OCI-LY7 (cell line): ENCODE measurements at regions of chr5 and their contacts with region 1.

Region 1: DNA sequence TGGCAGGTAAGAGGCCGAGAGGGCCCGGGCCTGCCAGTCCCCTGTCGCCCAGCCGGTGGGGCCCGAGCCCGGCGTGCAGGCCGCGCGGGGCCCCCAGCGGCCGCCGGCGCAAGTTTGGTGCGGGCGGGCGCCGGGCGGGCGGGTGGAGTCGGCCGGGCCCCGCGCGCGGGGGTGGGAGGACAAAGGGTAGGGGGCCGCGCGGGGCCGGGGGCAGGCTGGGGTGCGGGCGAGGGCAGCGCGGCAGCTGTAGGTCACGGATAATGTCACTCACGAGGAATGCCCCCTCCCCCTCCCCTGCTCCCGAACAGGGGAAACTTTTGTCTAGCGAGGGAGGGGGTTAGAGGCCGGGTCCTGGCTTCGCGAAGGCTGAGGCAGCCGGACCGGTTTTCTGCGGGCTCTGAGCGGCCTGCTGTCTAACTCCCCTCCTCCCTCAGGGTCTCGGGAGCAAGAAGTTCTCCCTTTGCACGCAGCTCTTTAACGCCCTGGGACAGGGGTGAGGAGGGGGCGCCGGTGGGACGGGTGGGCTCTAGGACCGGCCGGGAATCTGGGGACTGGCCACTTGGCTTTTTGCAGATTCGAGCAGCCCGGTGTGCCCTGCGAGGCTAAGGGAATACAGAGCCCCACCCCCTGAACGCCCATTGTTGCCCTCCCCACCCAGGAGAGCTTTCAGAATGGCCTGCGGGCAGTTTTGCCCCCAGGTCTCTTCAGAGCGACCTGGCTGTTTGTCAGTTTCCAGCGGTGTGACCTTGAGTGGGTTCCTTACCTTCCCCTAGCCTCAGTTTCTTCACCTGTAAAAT is 21.3 kb upstream of the NDST1 start:
- DNase-seq: peak; percentile 79
- H3K4me3 ChIP-seq: peak overlapping the region; percentile 92
- H3K27ac ChIP-seq: peak overlapping the region; percentile 73
- H3K4me1 ChIP-seq: peaks cover 57% of the 10 kb centered on the region
- CTCF ChIP-seq: no peak

Region 2: GRCh38 chr5:149960272-149961185 is 526.1 kb before region 1 on chr5 and contains the start of gene SLC26A2:
- CTCF ChIA-PET with region 1: no interaction called
- POLR2A ChIA-PET with region 1: no interaction called
- intact Hi-C with region 1: no loop called
- DNase-seq: peak; percentile 94
- H3K4me3 ChIP-seq: peak within 1 kb of the TSS; percentile 72
- H3K27ac ChIP-seq: no peak within 1 kb of the TSS
- H3K4me1 ChIP-seq: peaks cover 9% of the 10 kb centered on the region
- CTCF ChIP-seq: no peak
- total RNA-seq, gene SLC26A2: 1.2 and 2.1 TPM in 2 replicates

Region 3: DNA sequence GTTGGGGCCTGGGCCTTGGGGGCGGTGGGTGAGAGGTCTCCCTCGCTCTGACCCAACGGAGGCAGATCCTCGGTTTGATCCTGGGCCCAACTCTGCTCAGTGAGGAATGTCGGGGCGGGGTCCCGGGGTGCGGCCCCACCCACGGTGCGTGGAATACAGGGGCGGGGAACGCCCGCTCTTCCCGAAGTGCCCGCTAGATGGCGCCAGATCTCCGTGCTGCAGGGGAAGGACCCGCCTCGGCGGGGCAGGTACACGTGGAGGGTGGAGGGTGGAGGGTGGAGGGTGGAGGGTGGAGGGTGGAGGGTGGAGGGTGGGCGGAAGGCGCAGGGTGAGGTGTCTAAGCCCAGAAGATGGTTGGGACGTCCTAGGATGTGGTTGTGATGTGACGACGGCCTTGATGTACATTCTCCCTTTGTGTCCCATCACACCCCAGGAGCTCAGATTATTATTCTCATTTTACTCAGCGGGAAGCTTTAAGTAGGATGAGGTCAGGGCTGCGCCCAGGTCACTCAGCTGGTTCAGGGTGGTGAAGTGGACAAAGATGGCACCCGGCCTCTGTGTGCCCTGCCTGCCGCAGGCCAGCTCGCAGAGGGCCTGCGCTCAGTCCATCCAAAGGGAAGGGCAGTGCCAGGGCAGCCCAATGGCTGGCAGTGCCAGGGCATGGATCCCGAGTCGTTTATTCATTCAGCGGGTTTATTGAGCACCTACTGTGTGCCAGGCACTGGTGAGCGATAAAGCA is 27.6 kb before region 1 on chr5:
- CTCF ChIA-PET with region 1: interaction called, 12 read pairs
- POLR2A ChIA-PET with region 1: interaction called, 9 read pairs
- intact Hi-C with region 1: loop called (anchors 1 kb)
- DNase-seq: peak; percentile 84
- H3K4me3 ChIP-seq: no peak overlapping the region
- H3K27ac ChIP-seq: peak overlapping the region; percentile 87
- H3K4me1 ChIP-seq: peaks cover 71% of the 10 kb centered on the region
- CTCF ChIP-seq: peak; percentile 74

Region 4: GRCh38 chr5:150517272-150518152 is 30.9 kb after region 1 on chr5:
- CTCF ChIA-PET with region 1: interaction called, 9 read pairs
- POLR2A ChIA-PET with region 1: interaction called, 13 read pairs
- intact Hi-C with region 1: no loop called
- DNase-seq: no peak
- H3K4me3 ChIP-seq: no peak overlapping the region
- H3K27ac ChIP-seq: no peak overlapping the region
- H3K4me1 ChIP-seq: peaks cover 33% of the 10 kb centered on the region
- CTCF ChIP-seq: no peak

Region 5: DNA sequence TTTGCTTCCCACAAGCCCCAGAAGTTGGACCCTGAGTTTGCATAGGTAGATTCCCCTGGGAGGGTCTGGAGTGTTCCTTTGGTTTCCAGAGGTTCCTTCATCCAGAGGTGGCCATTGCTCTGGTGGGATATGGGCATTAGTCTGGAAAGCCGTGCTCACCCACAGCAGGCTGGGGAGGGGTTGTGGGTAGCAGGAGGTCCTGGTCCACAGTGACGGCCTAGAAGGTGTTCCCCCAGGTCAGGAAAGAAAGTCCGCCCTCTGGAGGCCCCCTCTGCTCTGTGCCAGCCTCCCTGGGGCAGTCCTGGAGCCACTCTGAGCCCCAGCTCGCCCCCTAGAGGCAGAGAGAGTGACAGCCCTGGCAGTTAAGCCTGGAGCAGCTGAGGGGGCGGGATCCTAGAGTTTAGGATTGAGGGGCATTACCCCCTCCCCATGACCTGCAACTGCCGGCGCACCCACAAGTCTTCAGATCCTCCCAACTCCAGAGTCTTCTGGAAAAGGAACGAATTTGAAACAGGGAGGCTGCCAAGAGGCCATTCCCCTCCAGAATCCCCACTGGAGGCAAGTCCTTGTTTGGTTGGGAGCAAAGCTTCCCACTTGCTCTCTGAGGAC is 58.1 kb after region 1 on chr5:
- CTCF ChIA-PET with region 1: interaction called, 3 read pairs
- POLR2A ChIA-PET with region 1: interaction called, 4 read pairs
- intact Hi-C with region 1: loop called (anchors 1 kb)
- DNase-seq: peak; percentile 86
- H3K4me3 ChIP-seq: no peak overlapping the region
- H3K27ac ChIP-seq: no peak overlapping the region
- H3K4me1 ChIP-seq: peaks cover 5% of the 10 kb centered on the region
- CTCF ChIP-seq: peak; percentile 97

Region 6: DNA sequence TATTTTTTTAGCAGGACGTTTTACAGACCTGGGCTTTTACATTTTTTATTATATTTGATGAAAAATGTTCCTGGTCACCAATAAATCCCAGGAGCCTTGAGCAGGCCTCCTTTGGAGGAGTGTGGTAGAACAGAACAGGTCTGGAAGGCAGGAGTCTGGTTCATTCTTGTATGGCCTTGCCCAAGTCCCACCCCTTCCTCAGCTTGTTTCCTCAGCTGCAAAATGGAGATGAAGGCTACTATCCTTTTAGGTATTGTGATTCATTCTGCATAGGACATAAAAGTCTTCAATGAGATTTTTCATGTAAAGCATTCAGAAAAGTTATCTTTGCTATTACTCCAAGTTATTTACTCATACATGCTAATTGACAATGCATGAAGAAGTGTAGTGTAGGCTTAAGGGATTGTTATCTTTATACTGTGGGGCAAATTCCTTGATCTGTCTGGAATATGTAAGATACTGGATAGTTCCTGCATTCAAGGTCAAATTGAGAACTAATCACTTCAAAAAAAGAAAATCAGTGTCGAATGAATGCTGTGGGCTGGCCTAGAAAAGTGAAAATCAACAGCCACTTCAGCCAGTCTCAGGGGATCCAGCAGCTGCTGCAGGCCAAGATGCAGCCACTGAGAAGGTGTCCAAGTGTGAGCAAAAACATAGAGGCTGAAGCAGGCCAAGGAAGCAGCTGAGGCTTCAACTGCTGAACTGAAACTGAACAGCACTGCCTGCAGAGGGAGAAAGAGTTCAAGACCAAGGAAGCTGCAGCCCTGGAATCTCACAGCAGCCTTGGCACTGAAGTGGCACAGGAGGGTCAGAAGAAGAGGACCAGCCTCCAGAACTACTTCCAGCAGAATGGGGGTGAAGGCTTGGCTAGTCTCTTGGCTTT is 832.5 kb after region 1 on chr5:
- CTCF ChIA-PET with region 1: no interaction called
- POLR2A ChIA-PET with region 1: no interaction called
- intact Hi-C with region 1: no loop called
- DNase-seq: peak; percentile 65
- H3K4me3 ChIP-seq: no peak overlapping the region
- H3K27ac ChIP-seq: no peak overlapping the region
- H3K4me1 ChIP-seq: peaks cover 6% of the 10 kb centered on the region
- CTCF ChIP-seq: peak; percentile 47; the same call in 1 of the 2 replicates